PC-9 (cell line): ENCODE measurements at regions of chr2 and their contacts with region 1.

Region 1: GRCh38 chr2:176096986-176097819 is 2.4 kb upstream of the HOXD12 start:
- DNase-seq: peak; percentile 63 to 79
- H3K4me3 ChIP-seq: peak overlapping the region; percentile 65
- H3K27ac ChIP-seq: no peak overlapping the region
- H3K4me1 ChIP-seq: peaks cover 13% of the 10 kb centered on the region; the same call in 1 of the 2 replicates
- H3K27me3 ChIP-seq: peaks cover 45% of the 10 kb centered on the region
- CTCF ChIP-seq: peak; percentile 98

Region 2: GRCh38 chr2:174465327-174465726 is 1631.9 kb before region 1 on chr2:
- CTCF ChIA-PET with region 1: no interaction called
- POLR2A ChIA-PET with region 1: no interaction called
- intact Hi-C with region 1: loop called (anchors 10 kb)
- DNase-seq: no peak
- H3K4me3 ChIP-seq: no peak overlapping the region
- H3K27ac ChIP-seq: no peak overlapping the region
- H3K4me1 ChIP-seq: no peaks in the 10 kb centered on the region
- H3K27me3 ChIP-seq: no peaks in the 10 kb centered on the region
- CTCF ChIP-seq: no peak

Region 3: DNA sequence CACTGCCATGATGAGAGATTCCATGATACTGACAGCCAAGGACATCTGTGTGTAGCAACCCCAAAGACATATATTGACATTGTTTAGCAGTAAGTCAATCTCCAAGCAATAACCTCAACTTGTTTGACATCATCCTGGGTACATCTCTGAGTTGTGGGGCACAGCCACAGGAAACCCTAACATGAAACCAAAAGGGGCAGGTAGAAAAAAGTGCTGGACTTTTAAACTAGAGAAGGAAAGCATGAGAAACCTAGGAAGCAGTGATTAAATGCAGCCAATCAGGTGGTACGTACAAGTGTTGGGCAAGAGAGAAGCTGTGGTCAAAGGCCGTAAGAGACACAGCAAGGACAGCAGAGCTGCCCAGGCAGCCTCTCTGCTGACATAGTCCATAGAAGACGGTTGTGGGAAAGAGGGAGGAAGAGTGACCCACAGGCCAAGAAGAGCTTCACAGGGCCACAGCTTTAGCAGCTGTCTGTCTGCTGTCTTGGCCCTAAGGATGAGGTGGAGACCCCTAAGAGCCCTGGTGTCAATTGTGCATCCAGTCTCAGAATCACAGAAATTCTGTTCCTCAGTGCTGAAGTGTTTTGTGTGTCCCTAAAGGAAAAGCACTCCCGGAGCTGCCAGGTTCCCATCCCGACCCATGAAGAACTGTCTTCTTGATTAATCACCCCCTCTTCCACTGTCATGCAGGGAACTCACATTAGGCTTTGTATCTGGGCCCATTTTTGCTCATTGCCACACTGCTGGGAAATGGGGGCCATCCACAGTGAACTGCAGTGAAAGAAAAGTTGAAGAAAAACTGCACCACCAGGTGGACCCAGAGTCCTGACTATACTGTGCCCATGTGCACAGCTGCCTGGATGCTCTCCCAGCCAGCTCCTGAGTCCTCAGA is 1066.6 kb before region 1 on chr2:
- CTCF ChIA-PET with region 1: no interaction called
- POLR2A ChIA-PET with region 1: no interaction called
- intact Hi-C with region 1: loop called (anchors 5 kb)
- DNase-seq: peak; percentile 45 to 46
- H3K4me3 ChIP-seq: no peak overlapping the region
- H3K27ac ChIP-seq: no peak overlapping the region
- H3K4me1 ChIP-seq: no peaks in the 10 kb centered on the region
- H3K27me3 ChIP-seq: no peaks in the 10 kb centered on the region
- CTCF ChIP-seq: peak; percentile 68

Region 4: GRCh38 chr2:175366815-175367214 is 730.4 kb before region 1 on chr2:
- CTCF ChIA-PET with region 1: interaction called, 5 read pairs
- POLR2A ChIA-PET with region 1: no interaction called
- intact Hi-C with region 1: loop called (anchors 1 kb)
- DNase-seq: peak in 1 of 2 experiments; percentile 18
- H3K4me3 ChIP-seq: no peak overlapping the region
- H3K27ac ChIP-seq: no peak overlapping the region
- H3K4me1 ChIP-seq: no peaks in the 10 kb centered on the region
- H3K27me3 ChIP-seq: peaks cover 15% of the 10 kb centered on the region
- CTCF ChIP-seq: peak; percentile 89

Region 5: DNA sequence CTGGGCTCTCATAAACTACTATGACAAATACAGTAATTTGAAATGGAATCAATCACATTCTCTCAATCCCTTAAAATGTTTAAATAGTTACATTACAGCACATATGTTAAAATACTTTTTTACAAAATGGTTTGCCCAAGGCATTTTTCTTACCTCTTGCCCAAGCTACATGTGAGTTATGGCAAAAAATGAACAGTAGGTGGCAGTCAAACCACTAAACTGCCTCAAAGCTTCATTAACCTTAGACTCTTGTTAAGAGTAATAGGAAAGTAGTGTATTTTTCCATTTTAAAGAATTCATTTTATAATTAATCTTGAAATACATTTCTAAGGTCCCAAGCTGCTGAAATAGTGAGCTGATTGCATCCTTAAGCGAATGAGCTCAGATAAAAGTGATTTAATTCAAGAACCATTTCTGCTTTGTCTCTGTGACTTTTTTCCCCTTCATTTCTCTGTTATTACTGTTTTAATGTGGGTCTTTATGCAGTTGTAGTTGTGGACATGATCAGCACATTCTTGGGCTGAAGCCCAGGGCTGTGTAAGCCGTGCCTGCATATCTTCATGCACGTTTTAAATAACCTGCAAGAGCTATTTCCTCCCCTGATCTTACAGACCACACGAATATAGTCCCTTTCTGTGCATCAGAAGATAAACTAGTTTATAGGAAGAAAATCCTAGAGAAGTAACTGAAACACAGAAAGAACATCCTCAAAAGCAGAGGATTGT is 406.9 kb before region 1 on chr2:
- CTCF ChIA-PET with region 1: interaction called, 22 read pairs
- POLR2A ChIA-PET with region 1: no interaction called
- intact Hi-C with region 1: loop called (anchors 1 kb)
- DNase-seq: peak; percentile 38 to 64
- H3K4me3 ChIP-seq: no peak overlapping the region
- H3K27ac ChIP-seq: no peak overlapping the region
- H3K4me1 ChIP-seq: no peaks in the 10 kb centered on the region
- H3K27me3 ChIP-seq: peaks cover 31% of the 10 kb centered on the region
- CTCF ChIP-seq: peak; percentile 94

Region 6: GRCh38 chr2:176128982-176129826 is 32.0 kb after region 1 on chr2 and contains the start of gene HOXD8:
- CTCF ChIA-PET with region 1: no interaction called
- POLR2A ChIA-PET with region 1: no interaction called
- intact Hi-C with region 1: no loop called
- DNase-seq: peak in 1 of 2 experiments; percentile 39
- H3K4me3 ChIP-seq: peak within 1 kb of the TSS; percentile 32; the same call in 1 of the 2 replicates
- H3K27ac ChIP-seq: no peak within 1 kb of the TSS
- H3K4me1 ChIP-seq: no peaks in the 10 kb centered on the region
- H3K27me3 ChIP-seq: peaks cover 51% of the 10 kb centered on the region
- CTCF ChIP-seq: no peak
- total RNA-seq, gene HOXD8: 0.39 and 0.50 TPM in 2 replicates

Region 7: GRCh38 chr2:176830362-176830761 is 733.2 kb after region 1 on chr2:
- CTCF ChIA-PET with region 1: no interaction called
- POLR2A ChIA-PET with region 1: no interaction called
- intact Hi-C with region 1: no loop called
- DNase-seq: no peak
- H3K4me3 ChIP-seq: no peak overlapping the region
- H3K27ac ChIP-seq: no peak overlapping the region
- H3K4me1 ChIP-seq: no peaks in the 10 kb centered on the region
- H3K27me3 ChIP-seq: peaks cover 15% of the 10 kb centered on the region
- CTCF ChIP-seq: no peak; the same call in 1 of the 2 replicates